PC-9 (cell line): ENCODE measurements at regions of chr12 and their contacts with region 1.

Region 1: GRCh38 chr12:100908501-100908900 is 113.9 kb downstream of the ANO4 start:
- DNase-seq: no peak
- H3K4me3 ChIP-seq: no peak overlapping the region
- H3K27ac ChIP-seq: no peak overlapping the region
- H3K4me1 ChIP-seq: no peaks in the 10 kb centered on the region
- H3K27me3 ChIP-seq: peaks cover 6% of the 10 kb centered on the region; the same call in 1 of the 2 replicates
- CTCF ChIP-seq: no peak

Region 2: GRCh38 chr12:100767950-100768349 is 140.6 kb before region 1 on chr12:
- CTCF ChIA-PET with region 1: no interaction called
- POLR2A ChIA-PET with region 1: no interaction called
- intact Hi-C with region 1: no loop called
- DNase-seq: no peak
- H3K4me3 ChIP-seq: no peak overlapping the region
- H3K27ac ChIP-seq: no peak overlapping the region
- H3K4me1 ChIP-seq: no peaks in the 10 kb centered on the region
- H3K27me3 ChIP-seq: no peaks in the 10 kb centered on the region
- CTCF ChIP-seq: no peak

Region 3: GRCh38 chr12:100991102-100991501 is 82.6 kb after region 1 on chr12:
- CTCF ChIA-PET with region 1: no interaction called
- POLR2A ChIA-PET with region 1: interaction called, 23 read pairs
- intact Hi-C with region 1: no loop called
- DNase-seq: no peak
- H3K4me3 ChIP-seq: no peak overlapping the region
- H3K27ac ChIP-seq: no peak overlapping the region
- H3K4me1 ChIP-seq: peaks cover 14% of the 10 kb centered on the region
- H3K27me3 ChIP-seq: no peaks in the 10 kb centered on the region
- CTCF ChIP-seq: no peak